Activated naive CD4-positive, alpha-beta T cell treated with anti-CD3 and anti-CD28 coated beads for 36 hours (primary cell): ENCODE measurements at regions of chr16 and their contacts with region 1.

Region 1: DNA sequence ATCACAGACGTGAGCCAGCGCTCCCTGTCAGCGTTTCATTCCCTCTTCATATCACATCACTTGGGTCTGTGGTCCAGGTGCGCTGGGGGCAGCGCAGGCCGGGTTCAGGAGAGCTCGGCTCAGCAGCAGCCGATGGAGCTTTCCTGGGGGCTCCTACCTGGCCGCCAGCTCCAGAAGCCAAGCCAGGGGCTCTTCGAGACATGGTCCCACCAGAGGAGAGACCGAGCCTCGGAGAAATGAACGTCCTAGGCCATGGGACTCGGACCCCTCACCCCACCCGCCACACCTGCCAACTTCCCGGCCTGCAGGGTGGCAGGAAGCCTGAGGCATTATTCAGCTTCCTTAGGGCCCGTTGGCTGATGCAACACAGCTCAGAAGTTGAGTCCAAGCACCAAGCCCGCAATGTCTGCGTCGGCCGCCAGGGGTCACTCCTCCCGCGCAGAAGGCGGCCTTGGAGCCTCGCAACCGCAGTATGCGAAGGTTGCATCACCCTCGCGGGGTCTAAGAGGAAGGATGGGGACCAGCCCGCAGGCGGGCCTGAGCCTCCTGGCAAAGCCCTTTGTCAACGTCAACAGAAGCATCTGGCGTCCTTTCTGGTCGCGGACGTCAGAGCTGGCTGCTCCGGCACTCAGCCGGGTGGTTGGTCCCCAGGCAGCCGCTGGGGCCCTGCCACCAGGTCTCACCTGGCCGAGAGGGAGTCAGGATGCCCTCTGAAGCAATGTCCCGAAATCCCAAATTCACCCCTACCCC is 13.2 kb upstream of the KLHDC4 start:
- DNase-seq: peak; percentile 98
- H3K4me3 Mint-ChIP-seq: peak overlapping the region; percentile 89
- H3K27ac Mint-ChIP-seq: peak overlapping the region; percentile 99
- H3K4me1 Mint-ChIP-seq: peaks cover 48% of the 10 kb centered on the region
- H3K27me3 Mint-ChIP-seq: no peaks in the 10 kb centered on the region

Region 2: GRCh38 chr16:87806603-87807546 is 27.9 kb after region 1 on chr16:
- CTCF ChIA-PET with region 1: interaction called, 27 read pairs
- intact Hi-C with region 1: loop called (anchors 1 kb)
- DNase-seq: peak; percentile 88
- H3K4me3 Mint-ChIP-seq: peak overlapping the region; percentile 89
- H3K27ac Mint-ChIP-seq: peak overlapping the region; percentile 94
- H3K4me1 Mint-ChIP-seq: peaks cover 31% of the 10 kb centered on the region
- H3K27me3 Mint-ChIP-seq: no peaks in the 10 kb centered on the region

Region 3: DNA sequence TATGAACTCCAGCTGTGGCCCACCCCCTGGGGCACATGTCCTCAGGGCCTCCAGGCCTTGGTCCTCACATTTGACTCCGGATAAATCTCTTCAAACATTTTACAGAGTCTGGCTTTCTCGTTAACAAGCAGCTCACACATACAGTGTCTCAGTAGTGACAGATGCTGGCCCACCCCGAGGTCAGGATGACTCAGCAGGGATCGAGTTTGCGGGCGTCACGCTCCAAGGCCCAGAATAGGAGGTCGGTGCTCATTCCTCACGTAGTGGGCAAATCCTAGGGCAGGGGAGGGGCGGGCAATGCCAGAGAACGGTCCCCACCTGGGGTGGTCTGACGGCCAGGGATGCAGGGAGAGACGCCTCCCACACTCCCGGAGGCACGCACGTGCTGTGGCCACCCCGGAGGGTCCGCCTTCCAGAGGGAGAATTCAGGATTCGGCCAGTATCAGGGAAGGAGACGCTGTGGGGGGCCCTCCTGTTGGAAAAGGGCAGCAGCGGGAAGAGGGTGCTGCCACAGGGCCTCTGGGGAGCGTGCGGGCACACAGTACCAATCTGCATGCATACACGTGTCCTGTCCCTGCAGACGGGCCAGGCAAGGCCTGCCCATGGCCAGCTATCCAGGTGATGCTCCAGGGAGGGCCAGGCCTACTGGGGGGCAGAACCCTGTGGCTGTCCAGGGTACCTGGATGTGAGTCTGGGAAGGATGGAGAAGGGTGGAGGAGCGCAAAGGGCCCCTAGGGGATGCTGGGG is 81.7 kb after region 1 on chr16:
- CTCF ChIA-PET with region 1: interaction called, 25 read pairs
- intact Hi-C with region 1: no loop called
- DNase-seq: no peak
- H3K4me3 Mint-ChIP-seq: peak overlapping the region; percentile 45
- H3K27ac Mint-ChIP-seq: peak overlapping the region; percentile 81
- H3K4me1 Mint-ChIP-seq: peaks cover 82% of the 10 kb centered on the region
- H3K27me3 Mint-ChIP-seq: no peaks in the 10 kb centered on the region

Region 4: GRCh38 chr16:87895641-87896141 is 116.7 kb after region 1 on chr16:
- CTCF ChIA-PET with region 1: interaction called, 9 read pairs
- intact Hi-C with region 1: loop called (anchors 1 kb)
- DNase-seq: peak; percentile 96
- H3K4me3 Mint-ChIP-seq: peak overlapping the region; percentile 38
- H3K27ac Mint-ChIP-seq: peak overlapping the region; percentile 98
- H3K4me1 Mint-ChIP-seq: peaks cover 54% of the 10 kb centered on the region
- H3K27me3 Mint-ChIP-seq: no peaks in the 10 kb centered on the region

Region 5: GRCh38 chr16:87950765-87951549 is 172.0 kb after region 1 on chr16 and contains the start of gene BANP:
- CTCF ChIA-PET with region 1: interaction called, 7 read pairs
- intact Hi-C with region 1: loop called (anchors 1 kb)
- DNase-seq: peak; percentile 98
- H3K4me3 Mint-ChIP-seq: peak within 1 kb of the TSS; percentile 85
- H3K27ac Mint-ChIP-seq: peak within 1 kb of the TSS; percentile 99
- H3K4me1 Mint-ChIP-seq: peaks cover 41% of the 10 kb centered on the region
- H3K27me3 Mint-ChIP-seq: no peaks in the 10 kb centered on the region
- total RNA-seq, gene BANP: 35.1 to 38.6 TPM

Region 6: GRCh38 chr16:88569985-88570690 is 791.1 kb after region 1 on chr16 and contains the start of gene ZC3H18:
- CTCF ChIA-PET with region 1: no interaction called
- intact Hi-C with region 1: loop called (anchors 10 kb)
- DNase-seq: peak; percentile 97
- H3K4me3 Mint-ChIP-seq: peak within 1 kb of the TSS; percentile 81
- H3K27ac Mint-ChIP-seq: peak within 1 kb of the TSS; percentile 84
- H3K4me1 Mint-ChIP-seq: peaks cover 41% of the 10 kb centered on the region
- H3K27me3 Mint-ChIP-seq: no peaks in the 10 kb centered on the region
- total RNA-seq, gene ZC3H18: 55.8 to 58.5 TPM